PC-9 (cell line): ENCODE measurements at regions of chr20 and their contacts with region 1.

Region 1: GRCh38 chr20:45817652-45818194 is 5.3 kb downstream of the UBE2C start:
- DNase-seq: peak; percentile 55 to 96
- H3K4me3 ChIP-seq: no peak overlapping the region
- H3K27ac ChIP-seq: peak overlapping the region; percentile 71
- H3K4me1 ChIP-seq: peaks cover 60% of the 10 kb centered on the region
- H3K27me3 ChIP-seq: no peaks in the 10 kb centered on the region
- CTCF ChIP-seq: no peak

Region 2: GRCh38 chr20:45890985-45891983 is 73.6 kb after region 1 on chr20 and contains the starts of genes CTSA and NEURL2:
- CTCF ChIA-PET with region 1: no interaction called
- POLR2A ChIA-PET with region 1: interaction called, 11 read pairs
- intact Hi-C with region 1: loop called (anchors 5 kb)
- DNase-seq: peak; percentile 81 to 90
- H3K4me3 ChIP-seq: peak within 1 kb of the TSS; percentile 82
- H3K27ac ChIP-seq: no peak within 1 kb of the TSS
- H3K4me1 ChIP-seq: peaks cover 14% of the 10 kb centered on the region; the same call in 1 of the 2 replicates
- H3K27me3 ChIP-seq: no peaks in the 10 kb centered on the region
- CTCF ChIP-seq: no peak; the same call in 1 of the 2 replicates
- total RNA-seq, gene CTSA: 123 and 132 TPM in 2 replicates
- total RNA-seq, gene NEURL2: 6.5 and 9.2 TPM in 2 replicates